Aorta (tissue), 5 donors: ENCODE measurements at regions of chr15 and their contacts with region 1.

Region 1: DNA sequence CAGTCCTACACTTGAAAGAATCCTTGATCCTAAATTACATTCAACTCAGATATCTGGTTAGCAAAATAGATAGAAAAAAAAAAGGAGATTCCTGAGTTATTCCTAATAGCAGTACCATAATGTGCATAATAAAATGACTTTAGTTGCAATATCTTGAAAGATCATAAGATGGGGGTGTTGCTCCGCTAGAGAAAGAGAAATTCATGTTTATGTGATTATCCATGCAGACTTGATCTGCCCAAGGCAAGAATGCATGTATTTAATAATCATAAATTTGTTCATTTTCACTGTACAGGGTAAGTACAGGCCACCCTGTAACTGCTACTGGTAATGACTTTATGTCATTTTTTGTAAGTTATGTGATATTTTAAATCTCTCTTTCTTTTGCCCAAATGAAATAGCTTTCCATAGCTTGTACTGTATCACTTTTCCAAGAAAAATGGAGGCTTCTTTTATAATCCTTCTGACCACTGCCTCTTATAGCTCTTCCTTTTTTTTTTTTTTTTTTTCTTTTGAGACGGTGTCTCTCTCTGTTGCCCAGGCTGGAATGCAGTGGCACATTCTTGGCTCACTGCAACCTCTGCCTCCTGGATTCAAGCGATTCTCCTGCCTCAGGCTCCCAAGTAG is 84.6 kb downstream of the HCN4 start:
- DNase-seq: no peak
- ATAC-seq: no peak
- H3K4me3 ChIP-seq: no peak overlapping the region
- H3K27ac ChIP-seq: no peak overlapping the region
- H3K4me1 ChIP-seq: peaks cover 4% of the 10 kb centered on the region in 2 donors
- H3K27me3 ChIP-seq: no peaks in the 10 kb centered on the region

Region 2: GRCh38 chr15:73156431-73157191 is 127.6 kb before region 1 on chr15:
- intact Hi-C with region 1: no loop called
- DNase-seq: no peak
- ATAC-seq: peak; percentile 36
- H3K4me3 ChIP-seq: no peak overlapping the region
- H3K27ac ChIP-seq: no peak overlapping the region
- H3K4me1 ChIP-seq: peaks cover 1 to 3% of the 10 kb centered on the region in 2 donors
- H3K27me3 ChIP-seq: no peaks in the 10 kb centered on the region

Region 3: GRCh38 chr15:73639464-73640188 is 355.4 kb after region 1 on chr15:
- intact Hi-C with region 1: loop called in 1 of 2 experiments (anchors 5 kb)
- DNase-seq: no peak
- ATAC-seq: no peak
- H3K4me3 ChIP-seq: no peak overlapping the region
- H3K27ac ChIP-seq: no peak overlapping the region
- H3K4me1 ChIP-seq: no peaks in the 10 kb centered on the region
- H3K27me3 ChIP-seq: no peaks in the 10 kb centered on the region